Mammary epithelial cell (primary cell): ENCODE measurements at regions of chr5 and their contacts with region 1.

Region 1: DNA sequence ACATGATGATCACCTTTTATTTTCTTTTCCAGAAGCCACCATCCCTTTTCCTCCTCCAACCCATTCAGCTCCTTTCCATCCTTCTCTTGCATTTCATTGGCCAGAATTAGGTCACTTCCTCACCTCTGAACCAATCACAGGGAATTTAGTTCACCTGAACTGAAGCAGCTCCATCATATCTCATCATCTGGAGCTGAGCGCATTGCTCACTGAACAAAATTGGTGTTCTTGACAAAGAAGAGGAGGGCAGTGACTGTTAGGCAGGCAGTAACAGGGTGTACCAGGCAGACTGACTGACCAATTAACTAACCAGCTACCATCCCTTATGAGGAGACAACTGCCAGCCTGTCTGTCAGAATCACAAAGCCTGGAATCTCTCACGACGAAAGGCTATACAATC is 1.8 kb upstream of the ZNF354A start:
- DNase-seq: no peak
- H3K4me3 ChIP-seq: no peak overlapping the region
- H3K27ac ChIP-seq: no peak overlapping the region
- H3K4me1 ChIP-seq: no peaks in the 10 kb centered on the region
- H3K27me3 ChIP-seq: no peaks in the 10 kb centered on the region
- CTCF ChIP-seq: no peak

Region 2: GRCh38 chr5:178612299-178612698 is 120.0 kb before region 1 on chr5:
- CTCF ChIA-PET with region 1: interaction called, 11 read pairs
- dilution Hi-C with region 1: no loop called
- in situ Hi-C with region 1: no loop called
- intact Hi-C with region 1: no loop called
- DNase-seq: no peak
- H3K4me3 ChIP-seq: no peak overlapping the region
- H3K27ac ChIP-seq: no peak overlapping the region
- H3K4me1 ChIP-seq: no peaks in the 10 kb centered on the region
- H3K27me3 ChIP-seq: no peaks in the 10 kb centered on the region
- CTCF ChIP-seq: no peak

Region 3: GRCh38 chr5:178642351-178642971 is 89.8 kb before region 1 on chr5:
- CTCF ChIA-PET with region 1: no interaction called
- dilution Hi-C with region 1: loop called (anchors 5 kb)
- in situ Hi-C with region 1: no loop called
- intact Hi-C with region 1: no loop called
- DNase-seq: peak; percentile 98
- H3K4me3 ChIP-seq: no peak overlapping the region
- H3K27ac ChIP-seq: no peak overlapping the region
- H3K4me1 ChIP-seq: peaks cover 35% of the 10 kb centered on the region
- H3K27me3 ChIP-seq: no peaks in the 10 kb centered on the region
- CTCF ChIP-seq: no peak

Region 4: GRCh38 chr5:178838695-178839685 is 106.7 kb after region 1 on chr5:
- CTCF ChIA-PET with region 1: no interaction called
- dilution Hi-C with region 1: no loop called
- in situ Hi-C with region 1: no loop called
- intact Hi-C with region 1: loop called (anchors 1 kb)
- DNase-seq: peak; percentile 46
- H3K4me3 ChIP-seq: no peak overlapping the region
- H3K27ac ChIP-seq: no peak overlapping the region
- H3K4me1 ChIP-seq: no peaks in the 10 kb centered on the region
- H3K27me3 ChIP-seq: no peaks in the 10 kb centered on the region
- CTCF ChIP-seq: peak; percentile 42 to 80

Region 5: DNA sequence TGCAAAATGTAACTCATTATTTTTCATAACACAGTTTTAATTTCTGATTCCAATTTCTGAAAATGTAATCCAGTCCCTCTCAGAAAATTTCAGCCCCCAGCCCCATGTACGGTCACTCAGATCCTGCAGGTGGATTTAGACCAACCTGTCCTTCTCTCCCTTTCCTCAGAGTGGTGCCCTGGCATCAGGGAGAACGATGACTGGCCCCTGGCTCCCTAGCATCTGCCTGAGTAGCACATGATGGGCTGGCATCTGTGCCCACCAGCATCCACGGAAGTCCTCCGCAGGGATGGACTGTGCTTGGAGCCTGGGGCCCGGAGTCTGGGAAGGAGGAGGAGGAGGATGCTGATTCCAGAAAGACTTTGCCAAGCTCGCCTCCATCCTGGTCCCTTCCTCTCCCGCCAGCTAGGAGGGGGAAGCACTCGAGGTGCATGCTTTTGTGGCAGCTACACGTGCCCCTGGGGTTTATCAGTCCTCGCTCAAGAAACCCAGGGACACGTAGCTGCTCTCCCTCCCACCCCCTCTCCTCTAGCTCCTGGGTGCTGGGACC is 763.7 kb after region 1 on chr5:
- CTCF ChIA-PET with region 1: interaction called, 4 read pairs
- dilution Hi-C with region 1: no loop called
- in situ Hi-C with region 1: no loop called
- intact Hi-C with region 1: loop called (anchors 1 kb)
- DNase-seq: no peak
- H3K4me3 ChIP-seq: no peak overlapping the region
- H3K27ac ChIP-seq: no peak overlapping the region
- H3K4me1 ChIP-seq: no peaks in the 10 kb centered on the region
- H3K27me3 ChIP-seq: no peaks in the 10 kb centered on the region
- CTCF ChIP-seq: peak in 1 of 2 donors; percentile 26